ENCODE measurements at regions of chr16 and their contacts with region 1.

Region 1: DNA sequence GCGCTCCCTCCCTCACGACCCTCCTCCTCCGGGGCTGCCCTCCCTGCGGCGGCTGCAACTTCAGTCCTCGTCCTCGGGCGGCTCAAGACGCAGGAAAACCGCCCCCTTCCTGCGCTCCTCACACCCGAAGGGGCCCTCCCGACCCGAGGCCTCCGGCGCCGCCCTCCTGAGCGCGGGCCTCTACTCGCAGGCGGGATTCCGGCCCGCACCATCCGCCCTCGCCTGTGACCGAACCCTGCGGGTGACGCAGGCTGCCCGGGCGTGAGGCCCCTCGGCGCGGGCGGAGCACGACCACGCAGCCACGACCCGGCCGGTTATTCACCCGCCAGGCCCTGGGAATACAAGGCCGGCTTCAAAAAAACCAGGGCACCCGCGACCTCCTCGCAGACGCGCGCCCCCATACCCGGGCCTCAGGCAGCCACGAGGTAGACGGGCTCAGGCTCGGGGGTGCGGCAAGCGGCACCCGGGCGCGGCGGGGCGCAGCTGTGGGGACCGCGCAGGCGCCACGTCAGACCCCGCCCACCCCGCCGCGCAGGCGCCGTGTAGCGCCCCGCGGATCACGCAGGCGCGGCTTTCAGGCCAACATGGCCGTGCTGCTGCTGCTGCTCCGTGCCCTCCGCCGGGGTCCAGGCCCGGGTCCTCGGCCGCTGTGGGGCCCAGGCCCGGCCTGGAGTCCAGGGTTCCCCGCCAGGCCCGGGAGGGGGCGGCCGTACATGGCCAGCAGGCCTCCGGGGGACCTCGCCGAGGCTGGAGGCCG is at the start of gene SPG7:
- DNase-seq: peak; percentile 98
- ATAC-seq: peak; percentile 74
- H3K4me3 Mint-ChIP-seq: peak within 1 kb of the TSS; percentile 88
- H3K27ac Mint-ChIP-seq: peak within 1 kb of the TSS; percentile 87
- H3K4me1 Mint-ChIP-seq: peaks cover 41% of the 10 kb centered on the region
- H3K27me3 Mint-ChIP-seq: no peaks in the 10 kb centered on the region
- CTCF ChIP-seq: no peak
- total RNA-seq, gene SPG7: 84.7 and 102 TPM in 2 replicates

Region 2: GRCh38 chr16:88811769-88812512 is 696.1 kb before region 1 on chr16 and contains the start of gene APRT:
- CTCF ChIA-PET with region 1: no interaction called
- POLR2A ChIA-PET with region 1: no interaction called
- intact Hi-C with region 1: loop called (anchors 10 kb)
- DNase-seq: peak; percentile 99
- ATAC-seq: peak; percentile 86
- H3K4me3 Mint-ChIP-seq: peak within 1 kb of the TSS; percentile 91
- H3K27ac Mint-ChIP-seq: peak within 1 kb of the TSS; percentile 97
- H3K4me1 Mint-ChIP-seq: peaks cover 17% of the 10 kb centered on the region
- H3K27me3 Mint-ChIP-seq: no peaks in the 10 kb centered on the region
- CTCF ChIP-seq: no peak
- total RNA-seq, gene APRT: 198 and 209 TPM in 2 replicates

Region 3: DNA sequence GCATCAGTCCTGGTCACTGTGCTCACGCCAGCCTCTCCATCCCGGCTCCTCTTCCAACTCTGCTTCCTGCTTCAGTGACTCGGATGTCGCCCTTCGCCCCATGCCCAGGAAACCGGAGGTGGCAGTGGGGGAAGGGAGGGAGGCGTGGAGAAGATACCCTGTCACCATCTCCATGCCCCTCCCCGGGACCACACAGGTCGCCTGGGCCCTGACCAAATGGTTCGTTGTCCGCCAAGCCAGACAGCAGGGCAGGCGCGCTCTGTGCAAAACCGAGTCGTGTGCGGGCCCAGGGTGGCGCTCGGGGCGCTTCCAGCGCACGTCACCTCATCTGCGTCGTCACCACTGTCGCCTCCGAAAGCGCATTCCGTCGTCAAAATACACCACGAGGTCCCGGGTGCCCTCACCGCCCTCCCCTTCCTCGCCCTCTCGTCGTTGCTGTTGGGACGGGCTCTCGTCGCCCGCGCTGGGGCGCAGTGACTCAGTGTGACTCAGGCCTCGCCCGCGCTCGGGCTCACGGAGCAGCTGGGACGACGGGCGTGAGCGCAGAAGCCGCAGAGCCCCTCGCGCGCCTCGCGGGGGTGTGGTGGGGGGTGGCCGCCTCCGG is 251.3 kb before region 1 on chr16:
- CTCF ChIA-PET with region 1: no interaction called
- POLR2A ChIA-PET with region 1: no interaction called
- intact Hi-C with region 1: loop called (anchors 2 kb)
- DNase-seq: peak; percentile 34
- ATAC-seq: peak; percentile 81
- H3K4me3 Mint-ChIP-seq: no peak overlapping the region
- H3K27ac Mint-ChIP-seq: no peak overlapping the region
- H3K4me1 Mint-ChIP-seq: peaks cover 15% of the 10 kb centered on the region
- H3K27me3 Mint-ChIP-seq: peaks cover 31% of the 10 kb centered on the region
- CTCF ChIP-seq: no peak

Region 4: GRCh38 chr16:89335803-89336485 is 172.1 kb before region 1 on chr16:
- CTCF ChIA-PET with region 1: interaction called, 6 read pairs
- POLR2A ChIA-PET with region 1: interaction called, 3 read pairs
- intact Hi-C with region 1: loop called (anchors 1 kb)
- DNase-seq: no peak
- ATAC-seq: no peak
- H3K4me3 Mint-ChIP-seq: no peak overlapping the region
- H3K27ac Mint-ChIP-seq: no peak overlapping the region
- H3K4me1 Mint-ChIP-seq: peaks cover 71% of the 10 kb centered on the region
- H3K27me3 Mint-ChIP-seq: no peaks in the 10 kb centered on the region
- CTCF ChIP-seq: no peak

Region 5: GRCh38 chr16:89410794-89411309 is 97.2 kb before region 1 on chr16:
- CTCF ChIA-PET with region 1: no interaction called
- POLR2A ChIA-PET with region 1: no interaction called
- intact Hi-C with region 1: no loop called
- DNase-seq: no peak
- ATAC-seq: no peak
- H3K4me3 Mint-ChIP-seq: peak overlapping the region; percentile 50
- H3K27ac Mint-ChIP-seq: no peak overlapping the region
- H3K4me1 Mint-ChIP-seq: peaks cover 76% of the 10 kb centered on the region
- H3K27me3 Mint-ChIP-seq: no peaks in the 10 kb centered on the region
- CTCF ChIP-seq: no peak

Region 6: GRCh38 chr16:89453501-89454321 is 54.3 kb before region 1 on chr16:
- CTCF ChIA-PET with region 1: no interaction called
- POLR2A ChIA-PET with region 1: interaction called, 7 read pairs
- intact Hi-C with region 1: loop called (anchors 2 kb)
- DNase-seq: no peak
- ATAC-seq: no peak
- H3K4me3 Mint-ChIP-seq: no peak overlapping the region
- H3K27ac Mint-ChIP-seq: peak overlapping the region; percentile 51
- H3K4me1 Mint-ChIP-seq: peaks cover 68% of the 10 kb centered on the region
- H3K27me3 Mint-ChIP-seq: no peaks in the 10 kb centered on the region
- CTCF ChIP-seq: no peak

Region 7: GRCh38 chr16:89545831-89546574 is 38.0 kb after region 1 on chr16:
- CTCF ChIA-PET with region 1: no interaction called
- POLR2A ChIA-PET with region 1: no interaction called
- intact Hi-C with region 1: no loop called
- DNase-seq: no peak
- ATAC-seq: no peak
- H3K4me3 Mint-ChIP-seq: no peak overlapping the region
- H3K27ac Mint-ChIP-seq: no peak overlapping the region
- H3K4me1 Mint-ChIP-seq: peaks cover 5% of the 10 kb centered on the region
- H3K27me3 Mint-ChIP-seq: no peaks in the 10 kb centered on the region
- CTCF ChIP-seq: no peak

Region 8: DNA sequence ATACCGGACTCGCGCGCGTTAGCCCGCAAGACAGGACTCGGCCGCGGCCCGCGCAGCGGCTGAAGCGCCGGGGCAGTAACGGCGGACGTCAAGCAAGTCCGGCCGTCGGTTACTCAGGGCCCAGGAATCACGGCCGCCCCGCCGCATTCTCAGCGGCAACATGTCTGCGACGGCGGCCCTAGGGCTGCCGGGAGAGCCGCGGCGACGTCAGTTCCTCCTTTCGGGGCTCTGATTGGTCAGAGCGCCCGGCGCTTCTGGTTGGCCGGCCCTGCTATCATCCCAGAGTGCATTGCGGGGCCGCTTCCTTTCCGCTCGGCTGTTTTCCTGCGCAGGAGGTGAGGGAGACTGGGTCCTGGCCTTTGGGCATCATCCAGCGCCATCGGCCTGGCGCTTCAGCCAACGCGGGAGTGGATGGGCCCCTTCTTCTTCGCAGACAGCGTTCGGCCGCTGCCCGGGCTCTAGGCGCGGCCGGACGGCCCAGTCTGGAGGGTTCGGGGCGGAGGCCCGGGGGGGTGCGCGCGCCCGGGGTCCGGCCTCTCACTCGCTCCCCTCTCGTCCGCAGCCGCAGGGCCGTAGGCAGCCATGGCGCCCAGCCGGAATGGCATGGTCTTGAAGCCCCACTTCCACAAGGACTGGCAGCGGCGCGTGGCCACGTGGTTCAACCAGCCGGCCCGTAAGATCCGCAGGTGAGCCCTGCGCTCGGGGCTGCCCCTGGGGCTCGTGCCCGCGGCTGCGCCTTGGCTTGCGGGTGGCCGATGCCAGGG is 52.5 kb after region 1 on chr16 and contains the start of gene RPL13:
- CTCF ChIA-PET with region 1: no interaction called
- POLR2A ChIA-PET with region 1: interaction called, 3 read pairs
- intact Hi-C with region 1: loop called (anchors 1 kb)
- DNase-seq: peak; percentile 83
- ATAC-seq: peak; percentile 92
- H3K4me3 Mint-ChIP-seq: peak within 1 kb of the TSS; percentile 96
- H3K27ac Mint-ChIP-seq: peak within 1 kb of the TSS; percentile 97
- H3K4me1 Mint-ChIP-seq: peaks cover 48% of the 10 kb centered on the region
- H3K27me3 Mint-ChIP-seq: no peaks in the 10 kb centered on the region
- CTCF ChIP-seq: no peak
- total RNA-seq, gene RPL13: 3,566 and 4,063 TPM in 2 replicates